Naive thymus-derived CD4-positive, alpha-beta T cell (primary cell): ENCODE measurements at regions of chr1 and their contacts with region 1.

Region 1: GRCh38 chr1:229661022-229661877 is 35.2 kb downstream of the URB2 start:
- DNase-seq: peak; percentile 38 to 72 (median 67)
- ATAC-seq: peak; percentile 87
- H3K4me3 ChIP-seq: no peak overlapping the region
- H3K4me3 Mint-ChIP-seq: no peak overlapping the region
- H3K27ac ChIP-seq: no peak overlapping the region
- H3K27ac Mint-ChIP-seq: peak overlapping the region in 3 of 9 donors; percentile 8 to 80 (median 66)
- H3K4me1 ChIP-seq: peaks cover 13% of the 10 kb centered on the region in 2 donors
- H3K4me1 Mint-ChIP-seq: peaks cover 0 to 11% (median 5%) of the 10 kb centered on the region in 7 donors
- H3K27me3 ChIP-seq: no peaks in the 10 kb centered on the region
- H3K27me3 Mint-ChIP-seq: no peaks in the 10 kb centered on the region

Region 2: DNA sequence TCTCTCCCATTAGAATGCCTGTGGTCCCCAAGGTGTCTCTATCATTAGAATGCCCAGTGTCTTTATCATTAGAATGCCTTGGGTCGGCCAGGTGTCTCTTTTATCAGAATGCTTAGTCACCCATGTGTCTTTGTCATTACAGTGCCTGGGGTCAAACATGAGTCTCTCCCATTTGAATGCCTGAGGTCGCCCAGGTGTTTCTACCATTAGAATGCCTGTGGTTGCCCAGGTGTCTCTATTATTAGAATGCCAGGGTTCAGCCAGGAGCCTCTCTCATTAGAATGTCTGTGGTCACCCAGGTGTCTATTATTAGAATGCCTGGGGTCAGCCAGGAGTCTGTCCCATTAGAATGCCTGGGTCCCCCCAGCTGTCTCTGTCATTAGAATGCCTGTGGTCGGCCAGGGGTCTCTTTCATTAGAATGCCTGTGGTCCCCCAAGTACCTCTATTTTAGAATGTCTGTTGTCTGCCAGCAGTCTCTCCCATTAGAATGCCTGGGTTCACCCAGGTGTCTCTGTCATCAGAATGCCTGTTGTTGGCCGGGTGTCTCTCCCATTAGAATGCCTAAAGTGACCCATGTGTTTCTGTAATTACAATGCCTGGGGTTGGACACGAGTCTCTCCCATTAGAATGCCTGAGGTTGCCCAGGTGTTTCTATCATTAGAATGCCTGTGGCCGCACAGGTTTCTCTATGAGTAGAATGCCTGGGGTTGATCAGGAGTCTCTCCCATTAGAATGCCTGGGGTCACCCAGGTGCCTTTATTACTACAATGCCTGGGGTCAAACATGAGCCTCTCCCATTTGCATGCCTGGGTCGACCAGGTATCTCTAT is 1117.0 kb before region 1 on chr1:
- CTCF ChIA-PET with region 1: no interaction called
- POLR2A ChIA-PET with region 1: no interaction called
- intact Hi-C with region 1: no loop called
- DNase-seq: no peak
- ATAC-seq: no peak
- H3K4me3 ChIP-seq: no peak overlapping the region
- H3K4me3 Mint-ChIP-seq: no peak overlapping the region
- H3K27ac ChIP-seq: no peak overlapping the region
- H3K27ac Mint-ChIP-seq: no peak overlapping the region
- H3K4me1 ChIP-seq: no peaks in the 10 kb centered on the region
- H3K4me1 Mint-ChIP-seq: no peaks in the 10 kb centered on the region
- H3K27me3 ChIP-seq: no peaks in the 10 kb centered on the region
- H3K27me3 Mint-ChIP-seq: peaks cover 0 to 86% (median 72%) of the 10 kb centered on the region in 5 donors

Region 3: DNA sequence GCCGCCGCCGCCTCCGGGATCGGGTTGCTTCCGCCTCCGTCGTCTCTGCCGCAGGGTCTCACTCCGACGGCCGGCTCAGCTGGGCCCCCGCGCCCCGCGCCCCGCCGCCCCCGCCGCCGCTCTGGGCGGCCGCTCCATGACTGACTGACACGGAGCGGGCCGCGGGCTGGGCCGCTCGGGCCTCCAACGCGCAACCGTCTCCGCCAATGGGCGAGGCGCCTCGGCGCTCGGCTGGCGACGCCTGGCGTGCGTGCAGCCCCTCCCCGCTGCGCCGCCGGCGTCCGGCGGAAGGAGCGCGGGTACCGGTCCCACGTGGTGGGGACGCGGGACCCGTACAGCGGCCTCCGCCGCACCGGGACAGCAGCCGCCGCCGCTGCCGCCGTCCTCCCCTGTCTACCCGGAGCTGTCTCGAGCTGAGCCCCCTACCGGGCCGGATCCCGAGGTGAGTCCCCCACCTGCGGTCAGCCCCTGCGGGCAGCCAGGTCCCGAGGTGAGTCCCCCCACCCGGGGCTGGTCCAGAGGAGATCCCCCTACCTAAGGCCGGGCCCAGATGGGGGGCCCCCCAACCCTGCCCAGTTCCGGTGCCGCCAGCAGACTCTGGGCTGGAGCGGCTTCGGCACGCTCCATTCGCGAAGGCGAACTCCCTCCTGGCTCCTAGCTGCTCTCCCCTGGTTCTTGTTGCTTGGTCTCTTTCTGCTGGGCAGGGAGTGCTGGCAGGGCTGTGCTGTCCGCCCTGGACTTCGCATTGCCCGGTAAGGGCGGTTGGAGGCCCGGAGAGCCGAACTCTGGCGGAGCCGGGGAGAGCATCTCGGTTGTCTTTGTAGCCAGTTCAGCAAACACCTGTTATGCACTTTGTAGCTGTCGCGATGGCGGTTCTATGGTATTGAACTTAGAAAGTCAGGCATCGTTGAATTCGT is 35.1 kb before region 1 on chr1 and contains the starts of genes TAF5L and URB2:
- CTCF ChIA-PET with region 1: no interaction called
- POLR2A ChIA-PET with region 1: no interaction called
- intact Hi-C with region 1: no loop called
- DNase-seq: peak; percentile 81 to 91 (median 85)
- ATAC-seq: peak; percentile 97
- H3K4me3 ChIP-seq: peak within 1 kb of the TSS; percentile 93
- H3K4me3 Mint-ChIP-seq: peak within 1 kb of the TSS; percentile 94 to 100 (median 98)
- H3K27ac ChIP-seq: peak within 1 kb of the TSS; percentile 80
- H3K27ac Mint-ChIP-seq: peak within 1 kb of the TSS; percentile 93 to 98 (median 97)
- H3K4me1 ChIP-seq: peaks cover 21 to 27% of the 10 kb centered on the region in 2 donors
- H3K4me1 Mint-ChIP-seq: peaks cover 39 to 69% (median 59%) of the 10 kb centered on the region in 7 donors
- H3K27me3 ChIP-seq: no peaks in the 10 kb centered on the region
- H3K27me3 Mint-ChIP-seq: no peaks in the 10 kb centered on the region
- total RNA-seq, gene TAF5L: 17.3 to 27.2 (median 19.8) TPM
- total RNA-seq, gene URB2: 6.2 to 18.2 (median 11.0) TPM

Region 4: DNA sequence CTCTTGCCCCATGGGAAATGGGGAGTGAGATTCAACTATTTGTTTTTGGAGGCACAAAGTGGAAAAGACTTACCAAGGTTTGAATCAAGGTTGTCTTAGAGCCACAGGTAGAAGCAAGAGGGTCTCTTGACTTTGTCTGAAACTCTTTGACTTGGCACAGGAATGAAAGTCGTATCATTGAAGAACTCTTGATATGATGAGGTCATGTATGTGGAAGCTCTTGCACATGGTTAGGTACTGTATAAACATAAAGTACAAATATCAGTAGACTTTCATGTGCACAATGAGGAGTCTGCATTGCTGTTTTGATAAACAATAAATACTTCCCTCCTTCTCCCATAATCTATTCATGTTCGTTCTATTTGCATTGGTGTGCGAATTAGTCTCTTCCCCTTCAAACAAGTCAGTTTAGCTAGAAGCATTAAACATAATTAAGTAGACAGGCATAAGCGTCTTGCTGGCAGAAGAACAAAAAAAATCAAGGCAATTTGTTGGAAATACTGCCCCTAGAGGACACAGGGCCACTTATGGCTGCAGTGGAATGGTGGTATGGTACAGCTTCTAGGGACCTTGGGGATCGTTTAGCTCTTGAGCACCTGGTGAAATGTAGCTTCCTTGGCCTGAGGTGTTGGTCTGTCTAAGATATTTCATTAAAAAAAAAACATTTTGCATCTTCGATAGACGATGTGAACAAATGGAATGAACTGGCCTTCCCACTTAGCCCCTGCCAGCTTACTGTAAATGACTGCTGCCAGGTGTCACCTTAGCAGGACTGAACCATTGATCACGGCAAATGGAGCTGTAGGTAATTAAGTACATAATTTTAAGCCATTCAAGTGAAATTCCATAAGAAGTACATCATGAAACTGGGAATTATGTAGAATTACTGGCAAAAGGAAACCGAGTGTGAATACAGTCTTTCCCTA is 187.8 kb after region 1 on chr1:
- CTCF ChIA-PET with region 1: no interaction called
- POLR2A ChIA-PET with region 1: no interaction called
- intact Hi-C with region 1: loop called (anchors 5 kb)
- DNase-seq: peak in 2 of 9 donors; percentile 3 to 26
- ATAC-seq: no peak
- H3K4me3 ChIP-seq: no peak overlapping the region
- H3K4me3 Mint-ChIP-seq: no peak overlapping the region
- H3K27ac ChIP-seq: no peak overlapping the region
- H3K27ac Mint-ChIP-seq: no peak overlapping the region
- H3K4me1 ChIP-seq: no peaks in the 10 kb centered on the region
- H3K4me1 Mint-ChIP-seq: no peaks in the 10 kb centered on the region
- H3K27me3 ChIP-seq: no peaks in the 10 kb centered on the region
- H3K27me3 Mint-ChIP-seq: peaks cover 7 to 20% (median 13%) of the 10 kb centered on the region in 5 donors

Region 5: GRCh38 chr1:230104395-230105244 is 443.4 kb after region 1 on chr1:
- CTCF ChIA-PET with region 1: interaction called, 4 read pairs
- POLR2A ChIA-PET with region 1: no interaction called
- intact Hi-C with region 1: loop called in 1 of 2 experiments (anchors 10 kb)
- DNase-seq: peak in 5 of 9 donors; percentile 11 to 75 (median 20)
- ATAC-seq: peak; percentile 81
- H3K4me3 ChIP-seq: no peak overlapping the region
- H3K4me3 Mint-ChIP-seq: peak overlapping the region in 9 of 10 donors; percentile 4 to 49 (median 21)
- H3K27ac ChIP-seq: no peak overlapping the region
- H3K27ac Mint-ChIP-seq: peak overlapping the region in 3 of 9 donors; percentile 4 to 56 (median 30)
- H3K4me1 ChIP-seq: peaks cover 14 to 17% of the 10 kb centered on the region in 2 donors
- H3K4me1 Mint-ChIP-seq: peaks cover 44 to 80% (median 72%) of the 10 kb centered on the region in 7 donors
- H3K27me3 ChIP-seq: no peaks in the 10 kb centered on the region
- H3K27me3 Mint-ChIP-seq: no peaks in the 10 kb centered on the region

Region 6: GRCh38 chr1:230109895-230110667 is 448.8 kb after region 1 on chr1:
- CTCF ChIA-PET with region 1: interaction called, 3 read pairs
- POLR2A ChIA-PET with region 1: no interaction called
- intact Hi-C with region 1: loop called (anchors 1 to 10 kb)
- DNase-seq: peak in 7 of 9 donors; percentile 25 to 72 (median 47)
- ATAC-seq: peak; percentile 73
- H3K4me3 ChIP-seq: no peak overlapping the region
- H3K4me3 Mint-ChIP-seq: peak overlapping the region in 6 of 10 donors; percentile 21 to 54 (median 39)
- H3K27ac ChIP-seq: no peak overlapping the region
- H3K27ac Mint-ChIP-seq: peak overlapping the region in 6 of 9 donors; percentile 34 to 84 (median 58)
- H3K4me1 ChIP-seq: peaks cover 0 to 4% of the 10 kb centered on the region in 2 donors
- H3K4me1 Mint-ChIP-seq: peaks cover 43 to 85% (median 68%) of the 10 kb centered on the region in 7 donors
- H3K27me3 ChIP-seq: no peaks in the 10 kb centered on the region
- H3K27me3 Mint-ChIP-seq: no peaks in the 10 kb centered on the region